AG04450 (cell line): ENCODE measurements at regions of chr21 and their contacts with region 1.

Region 1: DNA sequence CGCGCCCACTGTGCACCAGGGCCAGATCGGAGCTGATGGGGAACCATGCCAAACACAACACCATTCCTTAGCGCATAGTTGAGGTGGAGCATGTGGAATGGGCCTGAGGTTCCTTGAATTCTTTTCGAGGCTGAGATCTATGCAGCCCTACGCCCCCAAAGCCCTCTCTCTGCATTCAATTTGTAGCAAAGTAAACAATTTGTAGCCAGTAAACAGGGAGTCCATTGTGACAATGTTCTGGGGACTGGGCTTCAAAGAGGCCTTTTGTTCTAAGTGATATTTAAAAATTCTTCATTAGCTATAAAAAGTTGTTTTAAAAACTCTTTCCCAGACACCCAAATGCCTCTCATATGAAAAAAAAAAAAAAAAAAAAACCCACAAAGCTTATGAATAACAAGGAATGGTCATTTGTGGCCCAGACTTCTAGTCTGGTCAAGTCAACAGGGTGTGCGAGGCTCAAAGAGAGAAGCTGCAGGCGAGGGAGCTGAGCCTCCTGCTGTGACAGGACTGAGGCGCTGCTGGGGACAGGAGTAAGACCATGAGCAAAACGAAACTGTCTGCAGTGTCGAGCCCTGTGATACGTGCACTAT is 30.6 kb upstream of the KCNE2 start:
- DNase-seq: no peak
- H3K4me3 ChIP-seq: no peak overlapping the region
- H3K27ac ChIP-seq: no peak overlapping the region
- H3K27me3 ChIP-seq: no peaks in the 10 kb centered on the region
- CTCF ChIP-seq: no peak

Region 2: DNA sequence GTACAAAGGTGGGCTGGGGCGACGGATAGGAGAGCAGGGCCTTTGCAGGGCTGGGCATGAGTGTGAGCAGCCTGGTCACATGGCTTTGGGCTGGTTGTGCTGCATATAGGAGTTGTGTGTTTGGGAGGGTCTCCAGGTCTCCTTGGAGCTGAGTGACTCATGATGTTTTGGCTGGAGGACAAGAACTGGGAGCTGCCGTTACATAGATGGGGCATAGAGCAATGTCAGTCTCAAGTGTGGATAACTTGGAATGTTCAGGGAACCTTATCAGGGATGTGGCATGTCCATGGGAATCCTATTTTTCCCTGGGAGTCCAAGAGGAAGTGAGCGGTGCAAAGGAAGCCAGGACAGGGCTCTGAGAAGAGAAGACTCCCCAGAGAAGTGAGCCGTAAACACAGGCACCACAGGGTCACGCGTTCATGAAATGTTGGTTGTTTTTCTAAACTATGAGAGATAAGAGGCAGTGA is 105.8 kb before region 1 on chr21:
- CTCF ChIA-PET with region 1: no interaction called
- POLR2A ChIA-PET with region 1: no interaction called
- DNase-seq: peak; percentile 6
- H3K4me3 ChIP-seq: no peak overlapping the region
- H3K27ac ChIP-seq: no peak overlapping the region
- H3K27me3 ChIP-seq: peaks cover 6% of the 10 kb centered on the region
- CTCF ChIP-seq: no peak

Region 3: DNA sequence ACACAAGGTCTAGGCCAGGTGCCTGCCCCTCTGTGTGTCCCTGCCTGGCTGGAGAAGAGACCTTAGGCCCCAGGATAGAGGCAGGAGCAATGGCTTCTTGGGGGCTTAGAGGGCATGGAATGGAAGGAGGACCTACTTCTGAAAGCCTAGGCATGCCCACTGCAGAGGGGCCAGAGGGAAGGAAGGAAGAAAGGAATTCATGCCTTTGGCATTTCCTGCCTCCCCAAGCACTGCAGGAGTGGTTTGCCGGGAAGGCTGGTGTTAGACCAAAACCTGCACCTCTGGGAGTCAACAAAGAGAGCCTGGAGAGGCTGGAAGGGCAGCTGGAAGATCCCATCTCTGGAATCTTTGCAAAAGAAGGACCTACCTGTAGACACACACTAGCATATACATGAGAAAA is 20.1 kb before region 1 on chr21:
- CTCF ChIA-PET with region 1: no interaction called
- POLR2A ChIA-PET with region 1: no interaction called
- DNase-seq: no peak
- H3K4me3 ChIP-seq: no peak overlapping the region
- H3K27ac ChIP-seq: no peak overlapping the region
- H3K27me3 ChIP-seq: peaks cover 6% of the 10 kb centered on the region
- CTCF ChIP-seq: no peak

Region 4: GRCh38 chr21:34351786-34352241 is 18.6 kb after region 1 on chr21:
- CTCF ChIA-PET with region 1: interaction called, 13 read pairs
- POLR2A ChIA-PET with region 1: interaction called, 7 read pairs
- DNase-seq: no peak
- H3K4me3 ChIP-seq: no peak overlapping the region
- H3K27ac ChIP-seq: no peak overlapping the region
- H3K27me3 ChIP-seq: peaks cover 17% of the 10 kb centered on the region
- CTCF ChIP-seq: peak; percentile 75